ENCODE measurements at regions of chr5 and their contacts with region 1.

Region 1: DNA sequence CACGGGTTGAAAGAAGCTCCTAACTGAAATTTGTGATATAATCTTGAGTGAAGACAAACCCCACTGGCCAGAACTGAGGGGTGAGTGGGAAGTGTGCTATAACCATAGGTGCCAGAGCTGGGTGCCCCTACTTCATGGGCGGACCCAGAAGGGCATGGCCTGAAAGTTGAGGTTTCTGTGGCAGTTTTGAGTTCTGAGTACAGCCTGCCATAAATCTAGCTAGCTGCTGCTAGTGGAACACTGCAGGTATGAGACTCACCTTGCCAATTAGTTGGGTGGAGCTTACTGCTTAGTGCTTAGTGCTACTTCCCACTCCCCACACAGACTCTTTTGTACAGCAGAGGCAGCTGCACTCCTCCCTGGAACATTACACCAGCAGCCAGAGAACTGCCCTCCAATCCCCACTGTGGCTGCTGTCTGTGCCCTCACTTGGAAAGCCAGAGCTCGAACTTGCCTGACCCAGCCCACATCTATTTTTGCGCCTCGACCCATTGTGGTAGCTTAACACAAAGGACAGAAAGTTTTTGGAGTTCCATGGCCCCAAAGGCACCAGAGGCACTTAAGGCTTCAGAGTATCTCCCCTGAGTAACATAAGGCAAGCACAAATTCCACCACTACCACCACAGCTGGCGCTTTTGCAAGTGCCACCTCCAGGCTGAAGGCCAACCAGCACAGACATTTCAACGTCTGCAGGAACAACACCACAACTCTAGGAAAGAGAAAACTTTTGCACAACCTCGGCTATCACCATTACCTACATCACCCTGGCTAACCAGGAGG is 27.1 kb upstream of the PTGER4 start:
- DNase-seq: peak in 2 of 5 donors; percentile 15 to 54
- H3K4me3 ChIP-seq: peak overlapping the region; percentile 13
- H3K4me3 Mint-ChIP-seq: peak overlapping the region; percentile 44 to 89 (median 74)
- H3K27ac ChIP-seq: no peak overlapping the region
- H3K27ac Mint-ChIP-seq: peak overlapping the region; percentile 67 to 98 (median 94)
- H3K4me1 ChIP-seq: peaks cover 62% of the 10 kb centered on the region
- H3K4me1 Mint-ChIP-seq: peaks cover 58 to 89% (median 81%) of the 10 kb centered on the region in 3 donors
- H3K27me3 ChIP-seq: no peaks in the 10 kb centered on the region
- H3K27me3 Mint-ChIP-seq: no peaks in the 10 kb centered on the region

Region 2: DNA sequence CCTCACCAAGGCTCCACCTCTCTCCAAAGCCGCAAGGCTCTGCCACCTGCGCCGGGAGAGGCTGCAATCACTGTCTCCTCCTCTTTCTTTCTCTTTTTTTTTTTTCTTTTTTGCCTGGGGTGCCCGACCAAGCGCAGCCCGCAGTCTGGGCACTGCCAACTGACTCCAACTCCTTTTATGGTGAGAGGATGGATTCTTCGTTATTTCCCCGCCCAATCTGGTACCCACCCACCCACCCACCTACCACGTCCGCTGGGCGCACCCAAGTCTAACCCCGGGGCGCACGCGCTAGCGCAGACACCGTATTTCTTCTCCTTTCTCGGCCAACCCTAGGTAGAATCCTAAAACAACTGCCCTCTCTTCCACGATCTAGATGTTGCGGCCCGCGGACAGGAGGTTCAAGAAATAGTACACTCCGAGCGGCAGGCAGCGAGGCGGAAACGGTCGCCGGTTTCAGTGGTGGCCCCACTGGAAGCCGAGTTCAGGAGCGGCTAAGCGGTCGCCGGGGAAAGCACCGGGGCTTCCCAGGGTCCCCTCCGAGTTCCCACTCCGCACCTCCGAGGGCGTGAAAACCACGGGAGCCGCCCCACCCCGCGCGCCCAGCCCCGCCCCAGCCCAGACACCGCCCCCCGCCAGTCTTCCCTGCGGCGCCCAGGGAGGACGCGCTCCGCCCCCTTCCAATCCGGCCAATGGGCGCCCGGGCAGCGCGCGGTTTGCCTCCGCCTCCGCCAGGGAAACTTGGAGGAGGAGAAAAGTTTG is 26.7 kb after region 1 on chr5:
- CTCF ChIA-PET with region 1: interaction called, 28 read pairs
- POLR2A ChIA-PET with region 1: interaction called, 28 read pairs
- DNase-seq: peak; percentile 88 to 93 (median 89)
- H3K4me3 ChIP-seq: peak overlapping the region; percentile 96
- H3K4me3 Mint-ChIP-seq: peak overlapping the region; percentile 91 to 100 (median 99)
- H3K27ac ChIP-seq: peak overlapping the region; percentile 77
- H3K27ac Mint-ChIP-seq: peak overlapping the region; percentile 95 to 98 (median 98)
- H3K4me1 ChIP-seq: peaks cover 46% of the 10 kb centered on the region
- H3K4me1 Mint-ChIP-seq: peaks cover 52 to 60% (median 60%) of the 10 kb centered on the region in 3 donors
- H3K27me3 ChIP-seq: no peaks in the 10 kb centered on the region
- H3K27me3 Mint-ChIP-seq: peaks cover 0 to 3% of the 10 kb centered on the region in 2 donors

Region 3: DNA sequence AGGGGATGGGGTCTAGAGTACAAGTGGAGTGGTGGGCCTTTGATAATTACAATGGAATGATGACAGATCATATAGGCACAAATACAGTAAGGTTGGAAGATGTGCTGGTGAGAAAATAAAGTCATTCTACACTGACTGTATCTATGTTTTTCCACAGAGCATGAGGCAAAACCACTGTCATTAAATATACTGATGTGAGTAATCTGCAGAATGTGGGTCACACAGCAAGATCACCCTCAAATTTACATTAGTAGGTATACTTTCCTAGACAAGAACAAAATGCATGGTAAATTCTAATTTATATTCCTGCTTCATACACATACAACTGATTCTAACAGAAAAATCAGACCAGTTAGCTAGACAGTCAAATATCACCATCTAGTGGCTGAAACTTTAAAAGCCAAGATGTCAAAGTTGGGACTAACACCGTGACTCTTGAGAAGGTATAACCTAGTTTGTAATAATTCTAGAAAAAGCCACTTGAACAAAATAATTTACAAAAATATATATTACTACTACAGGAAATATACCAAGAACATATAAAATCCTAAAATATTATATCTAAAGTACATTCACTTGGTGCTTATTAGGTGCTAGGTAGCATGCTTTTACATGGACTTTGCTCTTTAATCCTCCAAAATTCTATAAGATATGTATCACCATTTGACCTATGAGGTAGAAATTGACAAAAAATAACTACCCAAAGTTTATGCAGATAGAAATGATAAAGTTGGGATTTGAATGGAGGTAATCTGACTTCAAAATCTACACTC is 83.7 kb after region 1 on chr5:
- CTCF ChIA-PET with region 1: no interaction called
- POLR2A ChIA-PET with region 1: no interaction called
- DNase-seq: peak in 2 of 5 donors; percentile 36 to 44
- H3K4me3 ChIP-seq: no peak overlapping the region
- H3K4me3 Mint-ChIP-seq: no peak overlapping the region
- H3K27ac ChIP-seq: no peak overlapping the region
- H3K27ac Mint-ChIP-seq: no peak overlapping the region
- H3K4me1 ChIP-seq: no peaks in the 10 kb centered on the region
- H3K4me1 Mint-ChIP-seq: peaks cover 10 to 28% (median 28%) of the 10 kb centered on the region in 3 donors
- H3K27me3 ChIP-seq: no peaks in the 10 kb centered on the region
- H3K27me3 Mint-ChIP-seq: no peaks in the 10 kb centered on the region

Measured in CD8-positive, alpha-beta memory T cell (primary cell).